Ovary (tissue), 10 donors: ENCODE measurements at regions of chr11 and their contacts with region 1.

Region 1: DNA sequence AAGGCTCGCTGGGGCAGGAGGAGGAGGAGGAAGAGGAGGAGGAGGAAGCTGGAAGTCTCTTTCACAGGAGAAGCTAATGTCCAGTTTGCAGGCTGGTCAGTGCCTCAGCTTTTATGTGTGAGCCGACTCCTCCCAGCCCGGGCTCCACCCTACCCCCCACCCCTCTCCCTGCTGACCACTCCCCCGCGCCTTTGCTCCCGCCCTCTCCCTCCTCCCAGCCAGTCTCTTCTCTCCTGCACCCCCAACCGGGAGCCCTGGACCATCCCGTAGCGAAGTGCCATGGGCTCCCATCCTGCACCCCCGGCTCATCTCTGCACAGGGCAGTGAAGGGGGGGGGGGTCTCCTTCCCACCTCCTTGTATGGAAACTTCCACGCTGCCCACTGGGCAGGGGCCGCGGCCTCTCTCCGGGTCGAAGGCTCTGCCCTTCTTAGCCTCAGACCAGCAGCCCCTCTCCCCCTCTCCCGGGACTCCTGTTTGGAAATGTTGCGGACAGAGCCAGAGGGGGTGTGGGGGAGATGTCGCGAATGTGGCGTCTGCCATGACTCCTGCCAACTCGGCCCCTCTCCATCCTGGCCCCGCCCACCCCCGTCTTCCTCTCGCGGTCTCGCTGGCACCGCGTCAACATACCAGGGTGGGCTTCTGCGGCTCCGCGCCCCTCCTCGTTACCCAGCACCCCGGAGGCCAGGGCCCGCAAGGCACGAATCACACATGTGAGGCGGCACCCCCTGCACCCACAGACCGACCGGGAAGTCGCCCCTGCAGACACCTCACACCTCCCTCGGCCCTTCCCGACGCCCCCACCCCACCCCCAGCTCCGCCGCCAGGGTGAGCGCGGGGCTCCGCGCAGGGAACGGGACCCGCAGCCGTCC is 1.8 kb downstream of the IGF2 start:
- DNase-seq: peak; percentile 69 to 84 (median 75)
- H3K4me3 ChIP-seq: peak overlapping the region; percentile 30
- H3K27ac ChIP-seq: peak overlapping the region in 1 of 2 donors; percentile 17
- H3K4me1 ChIP-seq: no peaks in the 10 kb centered on the region
- H3K27me3 ChIP-seq: no peaks in the 10 kb centered on the region
- CTCF ChIP-seq: no peak
- EP300 ChIP-seq: no peak
- POLR2A ChIP-seq: no peak

Region 2: DNA sequence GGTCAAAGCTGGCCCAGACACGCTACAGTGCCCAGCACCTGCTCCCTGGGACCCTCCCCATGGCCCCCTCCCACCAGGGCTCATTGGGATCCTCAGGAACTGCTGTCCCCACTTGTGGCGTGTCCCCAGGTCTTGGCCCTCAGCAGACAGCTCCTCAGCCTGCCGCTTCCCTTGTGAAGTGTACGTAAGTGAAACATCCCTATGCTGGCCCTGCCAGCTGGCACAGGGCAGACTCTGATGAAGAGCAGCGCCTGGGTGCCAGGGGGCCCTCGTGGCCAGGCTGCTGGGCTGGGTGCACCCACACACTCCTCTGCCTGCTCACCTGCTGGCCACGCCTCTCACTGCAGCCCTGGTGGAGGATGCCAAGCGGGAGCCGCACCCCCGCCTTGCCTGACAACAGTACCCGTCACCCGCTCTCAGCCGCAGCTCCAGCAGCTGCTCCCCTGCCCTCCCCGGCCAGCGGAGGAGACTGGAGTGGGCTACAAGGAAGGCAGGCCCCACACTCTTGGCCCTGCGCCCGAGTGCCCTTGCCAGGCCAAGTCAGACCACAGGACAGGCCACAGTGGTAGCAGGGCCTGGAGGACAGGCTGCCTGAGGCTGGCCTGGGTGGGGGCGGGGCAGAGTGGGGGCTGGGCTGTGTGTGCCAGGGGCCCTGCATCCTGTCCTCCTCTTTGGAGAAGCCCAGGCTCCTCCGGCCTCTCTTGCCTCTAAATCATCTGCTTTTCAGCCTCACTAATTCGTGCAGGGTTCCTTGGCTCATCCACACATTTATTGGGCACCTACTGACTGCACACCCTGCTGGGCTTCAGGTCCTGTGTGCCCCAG is 37.7 kb before region 1 on chr11:
- intact Hi-C with region 1: loop called in 1 of 4 experiments (anchors 5 kb)
- DNase-seq: peak in 3 of 5 donors; percentile 26 to 49 (median 49)
- H3K4me3 ChIP-seq: no peak overlapping the region
- H3K27ac ChIP-seq: no peak overlapping the region
- H3K4me1 ChIP-seq: peaks cover 18% of the 10 kb centered on the region
- H3K27me3 ChIP-seq: no peaks in the 10 kb centered on the region
- CTCF ChIP-seq: no peak
- EP300 ChIP-seq: no peak
- POLR2A ChIP-seq: no peak